ENCODE measurements at regions of chr3 and their contacts with region 1.

Region 1: GRCh38 chr3:52423173-52423572 is 21.7 kb downstream of the SEMA3G start:
- DNase-seq: no peak
- ATAC-seq: no peak
- H3K4me3 Mint-ChIP-seq: no peak overlapping the region
- H3K27ac Mint-ChIP-seq: no peak overlapping the region
- H3K4me1 Mint-ChIP-seq: no peaks in the 10 kb centered on the region
- H3K27me3 Mint-ChIP-seq: peaks cover 3% of the 10 kb centered on the region

Region 2: DNA sequence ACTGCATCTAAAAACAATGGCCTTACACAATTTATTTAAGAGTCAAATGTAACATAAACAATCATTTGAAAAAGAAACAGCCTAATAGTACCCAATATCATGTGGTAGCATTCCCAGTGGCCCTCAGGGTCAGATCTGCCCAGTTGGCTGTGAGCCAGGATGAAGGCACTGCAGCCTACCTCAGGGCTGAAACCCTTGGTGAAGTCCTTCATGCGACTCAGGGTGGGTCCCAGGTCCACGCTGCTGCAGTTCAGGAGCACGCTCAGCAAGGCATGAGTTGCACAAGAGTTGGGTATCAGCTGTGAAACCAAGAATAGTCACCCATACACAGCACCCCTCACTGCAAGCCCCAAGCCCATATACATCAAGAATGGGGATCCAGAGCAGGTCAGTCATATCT is 15.4 kb before region 1 on chr3:
- CTCF ChIA-PET with region 1: interaction called, 11 read pairs
- POLR2A ChIA-PET with region 1: no interaction called
- DNase-seq: no peak
- ATAC-seq: no peak
- H3K4me3 Mint-ChIP-seq: peak overlapping the region; percentile 81
- H3K27ac Mint-ChIP-seq: peak overlapping the region; percentile 36
- H3K4me1 Mint-ChIP-seq: peaks cover 39% of the 10 kb centered on the region
- H3K27me3 Mint-ChIP-seq: no peaks in the 10 kb centered on the region